SK-N-SH (cell line): ENCODE measurements at regions of chr13 and their contacts with region 1.

Region 1: GRCh38 chr13:25585000-25585399 is 213.2 kb downstream of the ATP8A2 start:
- DNase-seq: no peak
- H3K4me3 ChIP-seq: no peak overlapping the region
- H3K27ac ChIP-seq: no peak overlapping the region
- H3K4me1 ChIP-seq: no peaks in the 10 kb centered on the region
- H3K27me3 ChIP-seq: no peaks in the 10 kb centered on the region
- CTCF ChIP-seq: no peak
- EP300 ChIP-seq: no peak
- RAD21 ChIP-seq: no peak

Region 2: DNA sequence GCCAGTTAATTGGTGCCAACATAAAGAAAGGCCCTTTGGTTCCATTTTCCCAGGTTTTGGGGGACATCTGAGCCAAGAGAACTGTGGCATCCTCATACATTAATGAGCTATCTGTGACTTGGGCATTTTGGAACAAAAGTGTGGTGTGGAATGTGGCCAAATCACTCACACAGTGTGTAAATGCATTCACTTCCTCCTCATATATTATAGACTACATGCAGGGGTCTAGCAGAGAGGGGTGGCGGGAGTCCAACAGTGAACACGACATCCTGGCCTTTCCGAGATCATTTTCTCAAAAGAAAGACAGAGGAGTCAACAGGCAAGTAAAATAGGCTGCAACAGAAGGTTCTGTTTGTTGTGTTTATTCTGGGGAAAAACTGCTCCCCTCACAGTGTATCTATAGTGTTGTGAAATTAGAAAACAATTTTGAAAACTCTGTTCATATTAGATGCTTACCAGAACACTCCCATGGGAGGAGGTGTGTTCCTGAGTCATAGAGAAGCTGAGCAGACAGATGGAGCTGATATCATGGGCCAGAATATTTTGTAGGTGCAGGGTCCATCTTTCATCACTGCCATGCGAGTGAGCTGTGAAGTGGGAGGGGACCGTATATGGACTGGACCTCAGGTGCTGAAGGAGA is 452.1 kb before region 1 on chr13:
- CTCF ChIA-PET with region 1: no interaction called
- POLR2A ChIA-PET with region 1: no interaction called
- DNase-seq: no peak
- H3K4me3 ChIP-seq: no peak overlapping the region
- H3K27ac ChIP-seq: no peak overlapping the region
- H3K4me1 ChIP-seq: no peaks in the 10 kb centered on the region
- H3K27me3 ChIP-seq: no peaks in the 10 kb centered on the region; the same call in 1 of the 2 replicates
- CTCF ChIP-seq: no peak
- EP300 ChIP-seq: no peak
- RAD21 ChIP-seq: no peak

Region 3: GRCh38 chr13:25602176-25602575 is 17.2 kb after region 1 on chr13:
- CTCF ChIA-PET with region 1: no interaction called
- POLR2A ChIA-PET with region 1: no interaction called
- DNase-seq: no peak
- H3K4me3 ChIP-seq: no peak overlapping the region
- H3K27ac ChIP-seq: no peak overlapping the region
- H3K4me1 ChIP-seq: no peaks in the 10 kb centered on the region; a peak in 1 of 4 replicates
- H3K27me3 ChIP-seq: no peaks in the 10 kb centered on the region
- CTCF ChIP-seq: no peak
- EP300 ChIP-seq: no peak
- RAD21 ChIP-seq: no peak

Region 4: DNA sequence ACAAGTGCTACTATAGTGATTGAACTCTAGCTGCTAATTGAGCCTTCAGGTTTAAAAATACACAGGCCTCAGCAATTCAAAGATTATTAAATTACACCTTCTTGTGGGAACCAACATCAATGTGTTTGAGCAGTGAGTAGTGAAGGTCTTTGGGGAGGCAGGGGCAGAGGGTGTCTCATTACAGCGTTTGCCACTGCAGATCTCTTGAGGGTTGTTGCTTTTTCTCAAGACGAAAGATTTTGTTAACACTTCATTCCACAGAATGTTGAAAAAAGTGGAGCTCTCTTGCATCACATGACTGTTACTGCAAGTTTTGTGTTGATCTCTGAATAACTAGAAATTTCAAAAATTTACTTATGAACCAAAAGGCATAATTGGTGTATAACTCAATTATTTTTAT is 40.4 kb after region 1 on chr13:
- CTCF ChIA-PET with region 1: no interaction called
- POLR2A ChIA-PET with region 1: no interaction called
- DNase-seq: no peak
- H3K4me3 ChIP-seq: no peak overlapping the region
- H3K27ac ChIP-seq: no peak overlapping the region
- H3K4me1 ChIP-seq: no peaks in the 10 kb centered on the region
- H3K27me3 ChIP-seq: no peaks in the 10 kb centered on the region
- CTCF ChIP-seq: no peak
- EP300 ChIP-seq: no peak
- RAD21 ChIP-seq: no peak

Region 5: DNA sequence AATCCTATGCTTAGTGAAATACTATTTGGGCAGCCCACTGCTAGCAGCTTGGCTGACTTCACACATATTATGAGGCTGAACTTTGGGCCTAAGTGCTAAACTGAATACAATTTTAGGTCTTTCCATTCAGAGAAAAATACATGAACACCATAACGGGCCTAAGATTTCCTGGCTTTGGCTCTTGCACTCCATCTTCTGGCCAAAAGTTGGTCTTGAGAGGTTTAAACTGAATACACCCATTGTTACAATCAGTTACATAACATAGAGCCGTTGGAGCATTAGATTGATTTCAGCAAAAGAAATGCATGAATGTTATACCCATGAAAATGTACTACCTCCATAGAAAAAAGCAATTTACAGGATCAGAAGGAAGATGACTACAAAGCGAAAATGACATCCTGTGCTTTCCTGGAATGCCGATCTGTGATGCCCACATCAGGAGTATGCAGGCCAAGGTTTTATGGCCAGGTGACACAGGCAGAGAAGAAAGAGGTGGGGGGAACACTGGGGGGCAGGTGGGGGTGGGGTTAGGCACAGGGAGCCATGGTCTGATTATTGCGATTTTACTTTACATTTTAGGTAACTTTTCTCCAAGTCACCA is 477.9 kb after region 1 on chr13:
- CTCF ChIA-PET with region 1: interaction called, 12 read pairs
- POLR2A ChIA-PET with region 1: no interaction called
- DNase-seq: peak; percentile 47
- H3K4me3 ChIP-seq: no peak overlapping the region; a peak in 1 of 4 replicates
- H3K27ac ChIP-seq: no peak overlapping the region
- H3K4me1 ChIP-seq: no peaks in the 10 kb centered on the region
- H3K27me3 ChIP-seq: no peaks in the 10 kb centered on the region
- CTCF ChIP-seq: peak; percentile 62
- EP300 ChIP-seq: no peak
- RAD21 ChIP-seq: peak; percentile 90